GM12878 (cell line): ENCODE measurements at regions of chr5 and their contacts with region 1.

Region 1: GRCh38 chr5:132500931-132501630 is 10.5 kb upstream of the IRF1 start:
- DNase-seq: no peak
- ATAC-seq: peak; percentile 55
- H3K4me3 ChIP-seq: no peak overlapping the region
- H3K27ac ChIP-seq: peak overlapping the region; percentile 42; the same call in 1 of the 2 replicates
- H3K4me1 ChIP-seq: peaks cover 34% of the 10 kb centered on the region
- H3K27me3 ChIP-seq: no peaks in the 10 kb centered on the region
- CTCF ChIP-seq: peak; percentile 80 to 94 (median 85); a peak in 5 of 6 replicates
- EP300 ChIP-seq: 0 out of 4 replicates have a peak, but pooled peaks of 1 of the 2 experiments have one; percentile 11
- POLR2A ChIP-seq: no peak
- RAD21 ChIP-seq: peak; percentile 100

Region 2: GRCh38 chr5:132272311-132273210 is 228.5 kb before region 1 on chr5:
- CTCF ChIA-PET with region 1: interaction called, 7 read pairs
- POLR2A ChIA-PET with region 1: no interaction called
- RAD21 ChIA-PET with region 1: interaction called, 6 read pairs
- SMC1A ChIA-PET with region 1: interaction called, 3 read pairs
- in situ Hi-C with region 1: no loop called
- intact Hi-C with region 1: loop called (anchors 5 kb)
- DNase-seq: no peak
- ATAC-seq: no peak
- H3K4me3 ChIP-seq: no peak overlapping the region
- H3K27ac ChIP-seq: no peak overlapping the region
- H3K4me1 ChIP-seq: peaks cover 30% of the 10 kb centered on the region
- H3K27me3 ChIP-seq: no peaks in the 10 kb centered on the region
- CTCF ChIP-seq: peak; percentile 66 to 81 (median 77)
- EP300 ChIP-seq: no peak
- POLR2A ChIP-seq: no peak
- RAD21 ChIP-seq: peak; percentile 67

Region 3: GRCh38 chr5:132410451-132411381 is 90.4 kb before region 1 on chr5:
- CTCF ChIA-PET with region 1: interaction called, 30 read pairs
- POLR2A ChIA-PET with region 1: interaction called, 57 read pairs
- RAD21 ChIA-PET with region 1: interaction called, 121 read pairs
- SMC1A ChIA-PET with region 1: interaction called, 98 read pairs
- in situ Hi-C with region 1: no loop called
- intact Hi-C with region 1: no loop called
- DNase-seq: no peak
- ATAC-seq: peak; percentile 68
- H3K4me3 ChIP-seq: peak overlapping the region; percentile 89
- H3K27ac ChIP-seq: peak overlapping the region; percentile 95
- H3K4me1 ChIP-seq: peaks cover 11% of the 10 kb centered on the region
- H3K27me3 ChIP-seq: no peaks in the 10 kb centered on the region
- CTCF ChIP-seq: peak; percentile 54 to 67 (median 61)
- EP300 ChIP-seq: peak in 1 of 2 experiments; percentile 39; a peak in 1 of 4 replicates
- POLR2A ChIP-seq: peak; percentile 90
- RAD21 ChIP-seq: peak; percentile 51; the same call in 1 of the 2 replicates

Region 4: GRCh38 chr5:132426525-132427138 is 74.4 kb before region 1 on chr5:
- CTCF ChIA-PET with region 1: interaction called, 184 read pairs
- POLR2A ChIA-PET with region 1: interaction called, 389 read pairs
- RAD21 ChIA-PET with region 1: interaction called, 453 read pairs
- SMC1A ChIA-PET with region 1: interaction called, 162 read pairs
- in situ Hi-C with region 1: no loop called
- intact Hi-C with region 1: no loop called
- DNase-seq: no peak
- ATAC-seq: peak; percentile 62
- H3K4me3 ChIP-seq: peak overlapping the region; percentile 49
- H3K27ac ChIP-seq: peak overlapping the region; percentile 94
- H3K4me1 ChIP-seq: peaks cover 90% of the 10 kb centered on the region
- H3K27me3 ChIP-seq: no peaks in the 10 kb centered on the region
- CTCF ChIP-seq: peak; percentile 47 to 56 (median 52)
- EP300 ChIP-seq: peak; percentile 17 to 67; a peak in 3 of 4 replicates
- POLR2A ChIP-seq: peak; percentile 88
- RAD21 ChIP-seq: peak; percentile 42; the same call in 1 of the 2 replicates

Region 5: GRCh38 chr5:132466433-132467286 is 34.4 kb before region 1 on chr5:
- CTCF ChIA-PET with region 1: interaction called, 29 read pairs
- POLR2A ChIA-PET with region 1: interaction called, 17 read pairs
- RAD21 ChIA-PET with region 1: interaction called, 39 read pairs
- SMC1A ChIA-PET with region 1: interaction called, 14 read pairs
- in situ Hi-C with region 1: no loop called
- intact Hi-C with region 1: no loop called
- DNase-seq: peak; percentile 94
- ATAC-seq: peak; percentile 83
- H3K4me3 ChIP-seq: peak overlapping the region; percentile 42; the same call in 1 of the 2 replicates
- H3K27ac ChIP-seq: peak overlapping the region; percentile 96
- H3K4me1 ChIP-seq: peaks cover 60% of the 10 kb centered on the region
- H3K27me3 ChIP-seq: no peaks in the 10 kb centered on the region
- CTCF ChIP-seq: no peak
- EP300 ChIP-seq: peak; percentile 48 to 78; a peak in 3 of 4 replicates
- POLR2A ChIP-seq: no peak
- RAD21 ChIP-seq: peak; percentile 33

Region 6: GRCh38 chr5:132490486-132491367 is 10.4 kb before region 1 on chr5 and contains the start of gene IRF1:
- CTCF ChIA-PET with region 1: interaction called, 41 read pairs
- POLR2A ChIA-PET with region 1: interaction called, 26 read pairs
- RAD21 ChIA-PET with region 1: interaction called, 77 read pairs
- SMC1A ChIA-PET with region 1: interaction called, 9 read pairs
- in situ Hi-C with region 1: no loop called
- intact Hi-C with region 1: no loop called
- DNase-seq: no peak
- ATAC-seq: peak; percentile 80
- H3K4me3 ChIP-seq: peak within 1 kb of the TSS; percentile 98
- H3K27ac ChIP-seq: peak within 1 kb of the TSS; percentile 97
- H3K4me1 ChIP-seq: peaks cover 52% of the 10 kb centered on the region
- H3K27me3 ChIP-seq: no peaks in the 10 kb centered on the region
- CTCF ChIP-seq: 0 out of 6 replicates have a peak, but pooled peaks of 2 of the 3 experiments have one; percentile 3 to 7
- EP300 ChIP-seq: 0 out of 4 replicates have a peak, but pooled peaks of 1 of the 2 experiments have one; percentile 1
- POLR2A ChIP-seq: peak; percentile 94
- RAD21 ChIP-seq: 0 out of 2 replicates have a peak, but pooled peaks have one; percentile 0
- polyA plus RNA-seq, gene IRF1: 6.9 to 14.0 TPM